ENCODE measurements at regions of chr15 and their contacts with region 1.

Region 1: DNA sequence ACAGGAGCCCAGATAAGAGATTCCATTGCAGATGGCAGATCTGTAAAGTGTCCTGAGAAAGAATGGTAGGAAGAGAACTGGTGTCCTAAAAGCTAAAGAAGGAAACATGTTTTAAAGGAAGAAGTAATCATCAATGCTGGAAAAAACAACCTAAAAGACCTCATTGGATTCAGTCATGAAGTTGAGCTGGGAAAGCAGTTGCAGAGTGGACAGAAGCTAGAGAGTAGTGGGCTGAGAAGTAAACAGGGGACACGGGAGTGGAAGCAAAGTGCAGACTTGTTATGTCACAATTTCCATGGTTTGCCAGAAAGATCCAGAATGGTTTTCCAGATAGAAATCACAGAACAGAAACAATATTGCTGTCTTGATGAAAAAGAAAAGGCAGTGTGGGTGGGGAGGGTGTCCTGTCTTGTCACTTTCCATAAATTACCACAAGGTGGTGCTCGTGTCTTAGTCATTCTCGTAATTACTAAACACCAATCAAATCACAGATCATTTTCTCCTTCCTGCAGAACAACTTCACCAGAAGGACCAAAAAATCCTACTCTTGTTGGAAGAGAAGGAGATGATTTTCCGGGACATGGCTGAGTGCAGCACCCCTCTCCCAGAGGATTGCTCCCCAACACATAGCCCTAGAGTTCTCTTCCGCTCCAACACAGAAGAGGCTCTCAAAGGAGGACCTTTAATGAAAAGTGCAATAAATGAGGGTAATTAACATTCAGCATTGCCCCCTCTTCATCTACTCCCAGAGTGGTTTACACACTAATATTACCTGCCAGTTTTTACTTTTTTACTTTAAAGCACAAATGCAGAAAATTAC is 64.5 kb downstream of the KLHL25 start:
- DNase-seq: peak; percentile 74
- H3K4me3 ChIP-seq: no peak overlapping the region
- H3K27ac ChIP-seq: no peak overlapping the region
- H3K4me1 ChIP-seq: no peaks in the 10 kb centered on the region
- H3K27me3 ChIP-seq: no peaks in the 10 kb centered on the region
- CTCF ChIP-seq: peak; percentile 53 to 58
- POLR2A ChIP-seq: no peak

Region 2: GRCh38 chr15:85592148-85592547 is 138.1 kb before region 1 on chr15:
- CTCF ChIA-PET with region 1: interaction called, 9 read pairs
- POLR2A ChIA-PET with region 1: no interaction called
- dilution Hi-C with region 1: no loop called
- intact Hi-C with region 1: loop called (anchors 2 kb)
- DNase-seq: peak; percentile 93
- H3K4me3 ChIP-seq: no peak overlapping the region
- H3K27ac ChIP-seq: peak overlapping the region; percentile 60
- H3K4me1 ChIP-seq: peaks cover 11% of the 10 kb centered on the region
- H3K27me3 ChIP-seq: no peaks in the 10 kb centered on the region
- CTCF ChIP-seq: peak in 1 of 2 donors; percentile 23
- POLR2A ChIP-seq: no peak

Region 3: DNA sequence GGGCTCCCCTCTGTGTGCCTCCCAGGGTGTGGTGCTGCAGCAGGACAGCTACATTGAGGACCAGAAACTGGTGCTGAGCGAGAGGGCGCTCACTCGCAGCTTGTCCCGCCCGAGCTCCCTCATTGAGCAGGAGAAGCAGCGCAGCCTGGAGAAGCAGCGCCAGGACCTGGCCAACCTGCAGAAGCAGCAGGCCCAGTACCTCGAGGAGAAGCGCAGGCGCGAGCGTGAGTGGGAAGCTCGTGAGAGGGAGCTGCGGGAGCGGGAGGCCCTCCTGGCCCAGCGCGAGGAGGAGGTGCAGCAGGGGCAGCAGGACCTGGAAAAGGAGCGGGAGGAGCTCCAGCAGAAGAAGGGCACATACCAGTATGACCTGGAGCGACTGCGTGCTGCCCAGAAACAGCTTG is 10.8 kb after region 1 on chr15:
- CTCF ChIA-PET with region 1: interaction called, 13 read pairs
- POLR2A ChIA-PET with region 1: no interaction called
- dilution Hi-C with region 1: no loop called
- intact Hi-C with region 1: no loop called
- DNase-seq: no peak
- H3K4me3 ChIP-seq: no peak overlapping the region
- H3K27ac ChIP-seq: no peak overlapping the region
- H3K4me1 ChIP-seq: no peaks in the 10 kb centered on the region
- H3K27me3 ChIP-seq: no peaks in the 10 kb centered on the region
- CTCF ChIP-seq: no peak
- POLR2A ChIP-seq: no peak

Region 4: GRCh38 chr15:85794603-85795336 is 64.6 kb after region 1 on chr15 and contains the start of gene KLHL25:
- CTCF ChIA-PET with region 1: no interaction called
- POLR2A ChIA-PET with region 1: no interaction called
- dilution Hi-C with region 1: no loop called
- intact Hi-C with region 1: loop called (anchors 5 kb)
- DNase-seq: peak; percentile 95
- H3K4me3 ChIP-seq: peak within 1 kb of the TSS; percentile 43 to 76 (median 73)
- H3K27ac ChIP-seq: peak within 1 kb of the TSS; percentile 46
- H3K4me1 ChIP-seq: peaks cover 16% of the 10 kb centered on the region
- H3K27me3 ChIP-seq: peaks cover 2% of the 10 kb centered on the region in 2 experiments
- CTCF ChIP-seq: no peak
- POLR2A ChIP-seq: peak; percentile 66
- total RNA-seq, gene KLHL25: 5.2 and 5.4 TPM in 2 replicates

Region 5: GRCh38 chr15:85831415-85832113 is 101.4 kb after region 1 on chr15:
- CTCF ChIA-PET with region 1: interaction called, 37 read pairs
- POLR2A ChIA-PET with region 1: no interaction called
- dilution Hi-C with region 1: no loop called
- intact Hi-C with region 1: loop called (anchors 1 kb)
- DNase-seq: peak; percentile 49
- H3K4me3 ChIP-seq: no peak overlapping the region
- H3K27ac ChIP-seq: no peak overlapping the region
- H3K4me1 ChIP-seq: no peaks in the 10 kb centered on the region
- H3K27me3 ChIP-seq: peaks cover 4 to 5% of the 10 kb centered on the region in 2 experiments
- CTCF ChIP-seq: peak; percentile 50 to 73
- POLR2A ChIP-seq: no peak

Region 6: DNA sequence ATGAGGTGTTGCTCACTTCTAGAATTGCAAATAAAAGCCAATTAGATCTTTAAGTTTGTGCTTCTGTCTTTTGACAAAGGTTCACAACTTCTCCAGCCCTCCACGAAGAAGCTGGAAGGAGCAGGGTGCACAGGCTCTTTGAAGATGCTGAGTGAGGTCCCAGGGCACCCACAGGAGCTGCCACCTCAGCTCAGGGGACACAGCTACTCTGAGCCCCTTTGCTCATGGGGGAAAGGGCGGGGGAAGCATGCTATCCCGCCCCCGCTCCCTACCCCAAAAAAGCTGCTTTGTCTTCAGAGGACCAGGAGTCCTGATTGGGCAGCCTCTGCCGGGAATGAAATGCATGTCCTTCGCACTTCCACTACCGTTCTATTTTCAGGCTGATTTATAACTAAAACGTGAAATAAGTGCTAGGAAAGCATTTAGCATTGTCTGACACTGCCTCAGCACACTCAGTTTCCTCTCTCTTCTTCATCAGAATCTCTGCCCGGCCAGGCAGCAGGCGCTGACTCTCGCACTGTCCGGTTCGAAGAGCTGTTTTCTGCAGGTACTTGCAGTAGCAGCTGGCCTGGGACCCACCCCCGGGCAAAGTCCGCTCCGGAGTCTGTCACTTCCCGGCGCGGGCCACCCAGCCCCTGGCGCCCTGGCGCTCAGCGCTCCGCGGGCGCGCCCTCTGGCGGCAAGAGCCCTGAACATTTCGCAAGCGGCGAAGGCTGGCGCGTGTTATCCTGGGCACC is 110.0 kb after region 1 on chr15:
- CTCF ChIA-PET with region 1: interaction called, 56 read pairs
- POLR2A ChIA-PET with region 1: no interaction called
- dilution Hi-C with region 1: no loop called
- intact Hi-C with region 1: loop called (anchors 1 kb)
- DNase-seq: peak; percentile 75
- H3K4me3 ChIP-seq: peak overlapping the region in 2 of 3 experiments; percentile 3 to 9
- H3K27ac ChIP-seq: no peak overlapping the region
- H3K4me1 ChIP-seq: peaks cover 2% of the 10 kb centered on the region
- H3K27me3 ChIP-seq: peaks cover 0 to 4% of the 10 kb centered on the region in 2 experiments
- CTCF ChIP-seq: peak; percentile 94 to 98
- POLR2A ChIP-seq: no peak

Measured in endothelial cell of umbilical vein (primary cell).